Psoas muscle (tissue), 8 donors: ENCODE measurements at regions of chr15 and their contacts with region 1.

Region 1: GRCh38 chr15:25568751-25569150 is 129.9 kb upstream of the UBE3A start:
- DNase-seq: no peak
- ATAC-seq: peak; percentile 48 to 81 (median 62)
- H3K4me3 ChIP-seq: no peak overlapping the region
- H3K27ac ChIP-seq: no peak overlapping the region
- H3K4me1 ChIP-seq: peaks cover 35% of the 10 kb centered on the region
- H3K27me3 ChIP-seq: no peaks in the 10 kb centered on the region
- CTCF ChIP-seq: no peak

Region 2: DNA sequence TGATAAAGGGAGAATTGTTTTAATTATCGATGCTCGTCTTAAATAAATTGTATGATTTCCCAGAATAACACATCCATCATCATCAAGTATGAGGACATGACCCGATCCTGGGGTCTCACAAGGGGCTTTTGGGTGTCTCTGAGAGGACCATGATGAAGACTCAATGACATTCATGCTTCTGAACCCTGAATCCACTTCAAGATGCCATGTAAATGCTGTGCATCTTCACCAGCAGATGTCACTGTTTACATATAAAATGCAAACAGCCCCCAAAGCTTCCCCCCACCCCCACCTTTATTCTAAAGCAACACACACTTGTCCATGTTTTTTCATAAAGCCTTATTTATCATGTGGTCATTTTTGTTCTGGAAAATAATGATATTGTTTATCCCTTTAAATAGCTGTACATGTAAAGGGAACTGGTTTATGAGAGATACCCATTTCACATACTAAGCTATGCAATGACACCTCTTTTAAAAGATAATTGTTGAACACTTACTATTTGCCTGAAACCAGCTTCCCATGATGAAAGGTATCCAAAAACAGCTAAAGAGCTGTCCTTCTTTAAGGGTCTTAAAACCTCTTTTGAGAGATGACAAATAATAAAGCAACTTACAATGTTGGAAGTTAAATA is 60.3 kb before region 1 on chr15:
- intact Hi-C with region 1: loop called (anchors 10 kb)
- DNase-seq: no peak
- ATAC-seq: peak in 2 of 4 donors; percentile 63 to 78
- H3K4me3 ChIP-seq: no peak overlapping the region
- H3K27ac ChIP-seq: no peak overlapping the region
- H3K4me1 ChIP-seq: no peaks in the 10 kb centered on the region
- H3K27me3 ChIP-seq: no peaks in the 10 kb centered on the region
- CTCF ChIP-seq: peak; percentile 82

Region 3: DNA sequence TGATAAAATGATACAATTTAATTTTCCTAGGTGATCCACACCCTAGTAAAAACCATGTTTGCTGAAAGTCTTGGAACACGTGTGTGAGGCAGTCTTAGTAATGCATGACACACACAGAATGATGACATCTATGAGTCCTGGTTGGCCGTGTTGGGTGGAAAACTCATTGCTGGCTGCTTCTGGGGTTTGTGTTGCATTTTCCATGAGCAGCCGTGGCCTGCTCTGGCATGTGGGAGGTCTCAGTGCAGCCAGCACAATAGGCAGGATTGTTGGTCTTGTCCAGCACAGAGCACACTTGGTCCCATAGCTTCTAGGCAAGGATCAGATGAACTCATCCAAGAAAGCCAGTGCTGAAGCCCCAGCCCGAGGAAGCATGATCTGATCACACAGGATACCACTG is 42.9 kb after region 1 on chr15:
- intact Hi-C with region 1: loop called in 1 of 2 experiments (anchors 10 kb)
- DNase-seq: peak; percentile 41 to 66
- ATAC-seq: peak in 2 of 4 donors; percentile 38 to 50
- H3K4me3 ChIP-seq: no peak overlapping the region
- H3K27ac ChIP-seq: no peak overlapping the region
- H3K4me1 ChIP-seq: no peaks in the 10 kb centered on the region
- H3K27me3 ChIP-seq: no peaks in the 10 kb centered on the region
- CTCF ChIP-seq: no peak

Region 4: DNA sequence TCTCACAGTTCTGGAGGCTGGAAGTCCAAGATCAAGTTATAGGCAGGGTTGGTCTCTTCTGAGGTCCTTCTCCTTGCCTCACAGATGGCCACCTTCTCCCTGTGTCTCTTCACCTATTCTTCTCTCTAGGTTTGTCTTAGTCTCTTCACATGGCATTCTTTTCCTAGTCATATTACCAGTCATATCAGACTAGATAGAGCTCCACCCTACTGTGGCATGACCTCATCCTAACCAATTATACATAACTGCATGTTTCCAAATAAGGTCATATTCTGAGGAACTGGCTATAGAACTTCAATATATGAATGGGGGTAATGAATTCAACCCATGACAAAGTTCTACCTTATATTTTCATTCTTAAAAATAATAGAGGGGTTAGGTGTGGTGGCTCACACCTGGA is 66.4 kb after region 1 on chr15:
- intact Hi-C with region 1: loop called in 1 of 2 experiments (anchors 10 kb)
- DNase-seq: no peak
- ATAC-seq: no peak
- H3K4me3 ChIP-seq: no peak overlapping the region
- H3K27ac ChIP-seq: no peak overlapping the region
- H3K4me1 ChIP-seq: no peaks in the 10 kb centered on the region
- H3K27me3 ChIP-seq: no peaks in the 10 kb centered on the region
- CTCF ChIP-seq: no peak

Region 5: GRCh38 chr15:25664761-25665160 is 96.0 kb after region 1 on chr15:
- intact Hi-C with region 1: loop called in 1 of 2 experiments (anchors 5 kb)
- DNase-seq: no peak
- ATAC-seq: peak; percentile 43 to 72 (median 62)
- H3K4me3 ChIP-seq: no peak overlapping the region
- H3K27ac ChIP-seq: no peak overlapping the region
- H3K4me1 ChIP-seq: no peaks in the 10 kb centered on the region
- H3K27me3 ChIP-seq: no peaks in the 10 kb centered on the region
- CTCF ChIP-seq: no peak

Region 6: GRCh38 chr15:25674913-25675312 is 106.2 kb after region 1 on chr15:
- intact Hi-C with region 1: loop called in 1 of 2 experiments (anchors 5 kb)
- DNase-seq: peak; percentile 81 to 93
- ATAC-seq: peak; percentile 55 to 76 (median 74)
- H3K4me3 ChIP-seq: no peak overlapping the region
- H3K27ac ChIP-seq: peak overlapping the region; percentile 58
- H3K4me1 ChIP-seq: peaks cover 55% of the 10 kb centered on the region
- H3K27me3 ChIP-seq: no peaks in the 10 kb centered on the region
- CTCF ChIP-seq: no peak